Adrenal gland (tissue), 19 donors: ENCODE measurements at regions of chr2 and their contacts with region 1.

Region 1: DNA sequence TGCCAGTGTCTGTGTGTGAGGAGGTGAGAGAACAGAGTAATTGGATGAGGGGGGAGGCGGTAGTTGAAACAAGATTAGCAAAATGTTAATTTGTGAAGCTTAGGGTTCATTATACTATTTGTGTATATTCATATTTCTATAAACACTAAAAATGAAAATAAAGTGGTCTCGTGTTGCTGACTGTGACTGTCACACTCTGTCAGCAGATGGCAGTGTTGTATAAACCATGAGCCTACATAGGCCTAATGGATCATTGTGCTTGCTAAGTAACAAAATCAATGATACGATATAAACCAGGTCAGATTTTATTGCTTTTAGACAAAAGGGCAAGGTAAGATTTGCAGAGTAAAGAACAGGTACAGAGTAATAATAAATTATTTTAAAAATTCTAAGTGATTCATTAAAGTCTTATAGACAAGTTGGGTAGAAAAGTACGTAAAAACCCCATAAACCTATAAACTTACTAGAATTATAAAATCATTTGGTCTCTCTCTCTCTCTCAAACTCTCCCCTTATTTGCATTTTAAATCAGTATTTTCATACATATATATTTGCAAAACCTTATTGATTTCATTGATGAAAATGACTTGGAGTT is 182.7 kb downstream of the RPIA start:
- DNase-seq: peak; percentile 30 to 73 (median 53)
- H3K4me3 ChIP-seq: no peak overlapping the region
- H3K27ac ChIP-seq: no peak overlapping the region
- H3K4me1 ChIP-seq: no peaks in the 10 kb centered on the region
- H3K27me3 ChIP-seq: peaks cover 10% of the 10 kb centered on the region
- CTCF ChIP-seq: peak; percentile 53 to 80 (median 77)
- POLR2A ChIP-seq: no peak

Region 2: DNA sequence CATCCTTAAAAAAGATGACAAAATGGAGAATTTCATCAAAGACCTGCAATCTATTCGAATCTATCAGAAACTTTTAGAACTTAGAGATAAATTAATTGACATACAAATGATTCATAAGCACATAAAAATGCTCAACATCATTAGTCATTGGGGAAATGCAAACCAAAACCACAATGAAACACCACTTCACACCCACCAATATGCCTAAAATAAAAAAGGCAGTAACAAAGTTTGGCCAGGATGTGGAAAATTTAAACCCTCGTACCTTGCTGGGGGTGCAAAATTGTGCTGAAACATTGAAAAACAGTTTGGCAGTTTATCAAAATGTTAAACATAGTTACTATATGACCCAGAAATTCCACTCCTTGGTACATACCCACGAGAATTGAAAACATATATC is 235.4 kb before region 1 on chr2:
- intact Hi-C with region 1: no loop called
- DNase-seq: no peak
- H3K4me3 ChIP-seq: no peak overlapping the region
- H3K27ac ChIP-seq: no peak overlapping the region
- H3K4me1 ChIP-seq: no peaks in the 10 kb centered on the region
- H3K27me3 ChIP-seq: no peaks in the 10 kb centered on the region
- CTCF ChIP-seq: no peak
- POLR2A ChIP-seq: no peak

Region 3: GRCh38 chr2:88739985-88740600 is 134.1 kb before region 1 on chr2:
- intact Hi-C with region 1: loop called in 1 of 2 experiments (anchors 10 kb)
- DNase-seq: peak; percentile 49 to 90 (median 79)
- H3K4me3 ChIP-seq: no peak overlapping the region
- H3K27ac ChIP-seq: no peak overlapping the region
- H3K4me1 ChIP-seq: peaks cover 0 to 22% of the 10 kb centered on the region in 2 donors
- H3K27me3 ChIP-seq: no peaks in the 10 kb centered on the region
- CTCF ChIP-seq: peak; percentile 77 to 95 (median 81)
- POLR2A ChIP-seq: no peak

Region 4: DNA sequence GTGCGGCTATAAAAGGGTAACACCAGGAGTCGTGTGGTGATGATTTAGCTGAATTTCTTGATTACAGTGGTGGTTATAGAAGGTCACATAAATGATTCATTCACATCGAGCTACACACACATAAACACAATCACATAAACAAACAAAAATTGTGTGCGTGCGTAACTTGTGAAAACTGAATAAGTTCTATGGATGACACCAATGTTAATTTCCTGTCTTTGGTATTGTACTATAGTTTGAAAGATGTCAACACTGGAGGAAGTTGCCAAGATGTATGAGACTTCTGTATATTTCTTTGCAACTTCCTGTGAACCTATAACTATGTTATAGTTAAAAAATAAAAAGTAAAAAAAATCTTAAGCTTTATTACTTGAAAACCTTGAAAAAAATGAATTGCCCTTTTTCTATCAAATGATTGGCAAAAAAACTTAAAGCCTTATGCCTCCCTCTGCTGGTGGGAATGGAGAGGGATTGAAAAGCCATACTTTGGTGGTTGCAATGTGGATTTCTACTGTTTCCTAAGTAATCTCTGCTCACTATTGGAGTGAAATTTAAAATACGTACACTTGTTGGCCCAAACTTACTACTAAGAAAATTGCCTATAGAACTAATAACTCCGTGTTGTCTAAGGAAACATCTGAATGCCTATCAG is 45.1 kb after region 1 on chr2:
- intact Hi-C with region 1: loop called in 1 of 2 experiments (anchors 5 kb)
- DNase-seq: peak in 1 of 7 donors; percentile 27
- H3K4me3 ChIP-seq: no peak overlapping the region
- H3K27ac ChIP-seq: no peak overlapping the region
- H3K4me1 ChIP-seq: no peaks in the 10 kb centered on the region
- H3K27me3 ChIP-seq: no peaks in the 10 kb centered on the region
- CTCF ChIP-seq: peak; percentile 19 to 57 (median 36)
- POLR2A ChIP-seq: no peak